ENCODE measurements at regions of chr3 and their contacts with region 1.

Region 1: GRCh38 chr3:130900959-130901358 is 7.1 kb downstream of the ATP2C1 start:
- DNase-seq: no peak
- ATAC-seq: peak; percentile 45
- H3K4me3 ChIP-seq: no peak overlapping the region
- H3K27ac ChIP-seq: no peak overlapping the region
- H3K4me1 ChIP-seq: peaks cover 30% of the 10 kb centered on the region
- H3K27me3 ChIP-seq: no peaks in the 10 kb centered on the region
- CTCF ChIP-seq: no peak
- EP300 ChIP-seq: no peak
- POLR2A ChIP-seq: no peak
- RAD21 ChIP-seq: no peak

Region 2: DNA sequence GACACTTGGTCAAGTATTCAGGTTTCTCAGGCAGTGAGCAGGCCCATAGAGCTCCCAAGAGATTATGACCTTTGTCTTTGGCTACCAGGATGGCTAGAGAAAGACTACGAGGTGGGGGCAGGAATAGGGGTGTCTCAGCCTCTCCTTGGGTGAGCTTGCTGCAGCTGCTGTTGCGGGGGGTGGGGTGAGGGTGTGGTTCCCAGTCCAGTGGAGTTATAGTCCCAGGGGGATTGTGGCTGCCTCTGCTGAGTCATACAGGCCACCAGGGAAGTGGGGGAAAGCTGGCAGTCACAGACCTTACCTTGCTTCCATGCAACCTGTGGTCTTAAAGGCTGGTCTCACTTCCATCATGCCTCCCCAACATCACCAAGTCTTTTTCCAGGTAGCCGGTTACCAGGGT is 24.7 kb after region 1 on chr3:
- CTCF ChIA-PET with region 1: interaction called, 4 read pairs
- POLR2A ChIA-PET with region 1: no interaction called
- RAD21 ChIA-PET with region 1: interaction called, 3 read pairs
- SMC1A ChIA-PET with region 1: interaction called, 10 read pairs
- in situ Hi-C with region 1: no loop called
- intact Hi-C with region 1: no loop called
- DNase-seq: peak; percentile 56
- ATAC-seq: peak; percentile 83
- H3K4me3 ChIP-seq: no peak overlapping the region
- H3K27ac ChIP-seq: 0 out of 2 replicates have a peak overlapping the region, but pooled peaks have one; percentile 11
- H3K4me1 ChIP-seq: peaks cover 11% of the 10 kb centered on the region
- H3K27me3 ChIP-seq: no peaks in the 10 kb centered on the region
- CTCF ChIP-seq: no peak
- EP300 ChIP-seq: peak in 1 of 2 experiments; percentile 38; a peak in 1 of 4 replicates
- POLR2A ChIP-seq: no peak
- RAD21 ChIP-seq: no peak

Measured in GM12878 (cell line).